Thyroid gland (tissue), 4 donors: ENCODE measurements at regions of chr17 and their contacts with region 1.

Region 1: GRCh38 chr17:43832976-43833829 is at the start of gene MPP3:
- DNase-seq: peak; percentile 73
- H3K4me3 ChIP-seq: peak within 1 kb of the TSS; percentile 15 to 85 (median 75)
- H3K27ac ChIP-seq: peak within 1 kb of the TSS in 1 of 3 donors; percentile 59
- H3K4me1 ChIP-seq: peaks cover 17 to 27% of the 10 kb centered on the region in 2 donors
- H3K27me3 ChIP-seq: no peaks in the 10 kb centered on the region
- CTCF ChIP-seq: no peak
- POLR2A ChIP-seq: peak in 1 of 2 donors; percentile 65
- total RNA-seq, gene MPP3: 7.1 to 20.5 (median 15.4) TPM

Region 2: DNA sequence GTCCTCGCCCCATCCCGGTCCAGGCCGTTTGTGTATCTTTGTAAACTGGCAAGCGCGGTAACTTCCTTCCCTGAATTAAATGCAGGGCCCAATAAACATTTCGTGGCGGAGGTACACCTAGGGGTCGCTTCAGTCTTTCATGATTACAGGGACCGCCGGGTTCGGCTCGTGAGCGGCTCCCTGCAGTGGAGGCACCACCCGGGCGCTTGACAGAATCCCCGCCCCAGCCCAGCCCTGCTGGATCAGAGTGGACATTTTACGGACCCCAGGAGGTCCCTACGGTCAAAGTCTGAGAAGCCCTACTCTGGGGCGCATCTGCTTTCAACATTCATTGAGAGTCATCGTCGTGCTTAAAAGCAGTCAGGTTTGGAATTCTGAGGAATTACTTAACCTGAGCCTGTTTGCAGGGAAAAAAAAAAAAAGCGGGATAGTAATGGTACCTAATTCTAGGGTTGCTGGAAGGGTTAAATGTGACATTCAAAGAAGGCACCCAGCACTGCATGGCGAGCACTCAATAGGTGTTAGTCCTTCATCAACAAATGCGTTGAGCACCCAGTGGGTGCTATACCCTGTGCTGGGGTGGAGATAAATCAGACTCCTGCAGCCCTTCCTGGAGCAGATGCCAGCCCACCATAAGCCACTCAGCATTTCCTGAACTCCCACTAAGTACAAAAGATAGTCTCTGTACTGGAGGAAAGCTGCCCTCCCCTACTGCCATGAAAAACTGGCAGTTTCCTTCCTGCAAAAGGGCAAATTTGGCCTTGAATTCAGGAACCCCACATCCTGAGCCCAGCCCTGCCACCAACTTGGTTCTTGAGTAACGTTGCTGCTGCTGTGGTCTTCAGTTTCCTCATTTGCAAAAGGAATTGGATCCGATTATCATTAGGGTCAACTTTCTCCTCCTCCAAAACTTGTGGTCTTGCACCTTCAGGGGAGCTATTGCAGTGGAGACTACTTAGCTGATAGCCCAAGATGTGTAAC is 53.8 kb before region 1 on chr17:
- intact Hi-C with region 1: loop called (anchors 5 kb)
- DNase-seq: peak; percentile 45 to 63
- H3K4me3 ChIP-seq: peak overlapping the region in 2 of 3 donors; percentile 27 to 99
- H3K27ac ChIP-seq: peak overlapping the region; percentile 64 to 100 (median 100)
- H3K4me1 ChIP-seq: peaks cover 9 to 27% of the 10 kb centered on the region in 2 donors
- H3K27me3 ChIP-seq: no peaks in the 10 kb centered on the region
- CTCF ChIP-seq: peak in 3 of 6 experiments; percentile 22 to 35 (median 23)
- POLR2A ChIP-seq: no peak